ENCODE measurements at regions of chr11 and their contacts with region 1.

Region 1: DNA sequence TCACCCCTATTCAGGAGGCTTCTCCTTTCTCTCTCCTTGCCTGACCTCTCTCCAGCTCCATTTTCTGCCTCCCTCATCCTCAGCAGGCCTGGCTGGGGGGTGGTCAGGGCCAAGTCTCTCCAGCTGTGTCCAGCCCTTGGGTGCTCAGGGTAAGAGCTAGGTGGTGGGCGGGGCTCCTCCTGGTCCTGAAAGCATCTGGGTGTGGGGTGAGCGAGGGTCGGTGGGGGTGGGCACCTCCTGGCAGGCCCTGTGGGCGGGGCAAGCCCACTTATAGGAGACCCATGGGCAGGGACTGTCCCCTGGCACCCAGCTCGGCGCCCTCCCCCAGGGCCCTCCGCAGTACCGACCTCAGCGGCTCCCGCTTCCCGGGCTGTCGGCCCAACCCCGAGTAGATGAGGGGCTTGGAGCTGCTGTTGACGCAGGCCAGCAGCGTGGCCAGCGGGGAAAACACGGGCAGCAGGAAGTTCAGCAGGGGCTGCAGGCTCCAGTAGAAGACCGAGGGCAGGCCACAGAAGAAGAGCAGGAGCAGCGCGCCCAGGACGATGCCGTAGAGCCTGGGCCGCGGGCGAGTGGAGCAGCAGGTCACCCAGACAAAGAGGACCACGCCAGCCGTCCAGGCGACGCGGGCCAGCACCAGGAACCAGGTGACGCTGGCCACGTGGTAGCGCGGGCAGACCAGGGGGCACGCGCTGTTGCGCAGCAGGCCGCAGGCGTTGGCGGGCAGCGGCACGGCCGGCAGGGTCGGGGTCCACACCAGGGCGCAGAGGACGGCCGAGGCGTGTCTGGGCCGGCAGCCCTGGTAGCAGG is 734 bp downstream of the MRGPRG start:
- DNase-seq: peak; percentile 62
- H3K4me3 ChIP-seq: no peak overlapping the region
- H3K27ac ChIP-seq: no peak overlapping the region
- H3K4me1 ChIP-seq: peaks cover 0 to 6% (median 0%) of the 10 kb centered on the region in 4 donors
- H3K27me3 ChIP-seq: peaks cover 5 to 78% (median 33%) of the 10 kb centered on the region in 3 donors
- CTCF ChIP-seq: no peak
- EP300 ChIP-seq: no peak
- POLR2A ChIP-seq: no peak

Region 2: GRCh38 chr11:3037040-3037944 is 180.6 kb before region 1 on chr11:
- intact Hi-C with region 1: loop called (anchors 2 kb)
- DNase-seq: peak; percentile 90
- H3K4me3 ChIP-seq: no peak overlapping the region
- H3K27ac ChIP-seq: peak overlapping the region in 3 of 4 donors; percentile 9 to 35 (median 23)
- H3K4me1 ChIP-seq: peaks cover 0 to 14% (median 8%) of the 10 kb centered on the region in 4 donors
- H3K27me3 ChIP-seq: no peaks in the 10 kb centered on the region
- CTCF ChIP-seq: peak; percentile 74 to 90 (median 77)
- EP300 ChIP-seq: no peak
- POLR2A ChIP-seq: no peak

Region 3: GRCh38 chr11:3109921-3110706 is 107.8 kb before region 1 on chr11:
- intact Hi-C with region 1: loop called (anchors 1 kb)
- DNase-seq: peak; percentile 78
- H3K4me3 ChIP-seq: no peak overlapping the region
- H3K27ac ChIP-seq: no peak overlapping the region
- H3K4me1 ChIP-seq: no peaks in the 10 kb centered on the region
- H3K27me3 ChIP-seq: no peaks in the 10 kb centered on the region
- CTCF ChIP-seq: peak; percentile 48 to 71 (median 59)
- EP300 ChIP-seq: no peak
- POLR2A ChIP-seq: no peak

Region 4: DNA sequence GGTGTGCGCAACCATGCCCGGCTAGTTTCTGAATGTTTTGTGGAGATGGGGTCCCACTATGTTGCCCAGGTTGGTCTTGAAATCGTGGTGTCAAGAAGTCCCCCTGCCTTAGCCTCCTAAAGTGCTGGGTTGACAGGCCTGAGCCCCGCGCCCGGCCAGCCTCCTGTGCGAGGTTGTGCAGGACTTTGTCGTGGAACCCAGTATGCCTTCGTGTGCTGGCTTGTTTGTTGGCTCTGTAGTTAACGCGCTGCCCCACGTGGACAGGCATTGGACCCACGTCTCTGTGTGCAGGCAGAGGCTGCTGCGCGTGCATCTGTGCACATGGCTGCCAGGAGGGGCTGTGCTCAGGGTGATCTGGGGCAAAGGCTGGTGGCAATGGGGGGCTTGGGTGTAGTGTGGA is 195.0 kb after region 1 on chr11:
- intact Hi-C with region 1: loop called (anchors 10 kb)
- DNase-seq: no peak
- H3K4me3 ChIP-seq: no peak overlapping the region
- H3K27ac ChIP-seq: no peak overlapping the region
- H3K4me1 ChIP-seq: no peaks in the 10 kb centered on the region
- H3K27me3 ChIP-seq: no peaks in the 10 kb centered on the region
- CTCF ChIP-seq: no peak
- EP300 ChIP-seq: no peak
- POLR2A ChIP-seq: no peak